ENCODE measurements at regions of chr14 and their contacts with region 1.

Region 1: DNA sequence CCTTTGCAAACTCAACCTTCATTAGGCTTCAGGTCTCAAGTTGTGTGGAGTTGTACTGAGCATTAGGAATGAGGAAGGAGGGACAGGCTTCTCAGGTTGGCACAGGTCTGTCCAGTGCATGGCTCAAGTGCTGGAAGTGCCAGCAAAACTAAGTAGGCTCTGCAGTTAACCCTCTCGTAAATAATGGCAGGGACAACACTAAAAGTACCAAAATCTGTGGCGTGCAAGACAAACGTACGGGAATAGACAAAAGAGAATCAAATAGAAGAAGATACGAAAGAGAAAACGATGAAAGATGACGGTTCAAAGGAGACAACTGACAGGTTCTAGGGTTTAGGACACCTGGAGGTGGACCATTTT is 612 bp downstream of the TRAPPC6B start:
- DNase-seq: no peak
- ATAC-seq: no peak
- H3K4me3 Mint-ChIP-seq: peak overlapping the region; percentile 82 to 99 (median 94)
- H3K27ac Mint-ChIP-seq: peak overlapping the region; percentile 98 to 100 (median 99)
- H3K4me1 Mint-ChIP-seq: peaks cover 23 to 58% (median 45%) of the 10 kb centered on the region in 4 donors
- H3K27me3 Mint-ChIP-seq: no peaks in the 10 kb centered on the region

Region 2: DNA sequence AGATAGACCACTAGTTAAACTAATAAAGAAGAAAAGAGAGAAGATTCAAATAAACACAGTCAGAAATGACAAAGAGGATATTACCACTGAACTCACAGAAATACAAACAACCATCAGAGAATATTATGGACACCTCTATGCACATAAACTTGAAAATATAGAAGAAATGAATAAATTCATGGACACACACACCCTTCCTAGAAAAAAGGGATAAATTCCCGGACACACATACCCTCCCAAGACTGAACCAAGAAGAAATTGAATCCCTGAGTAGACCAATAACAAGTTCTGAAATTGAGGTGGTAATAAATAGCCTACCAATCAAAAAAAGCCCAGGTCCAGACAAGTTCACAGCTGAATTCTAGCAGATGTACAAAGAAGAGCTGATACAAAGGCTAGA is 254.4 kb before region 1 on chr14:
- POLR2A ChIA-PET with region 1: no interaction called
- DNase-seq: no peak
- ATAC-seq: no peak
- H3K4me3 Mint-ChIP-seq: no peak overlapping the region
- H3K27ac Mint-ChIP-seq: no peak overlapping the region
- H3K4me1 Mint-ChIP-seq: no peaks in the 10 kb centered on the region
- H3K27me3 Mint-ChIP-seq: peaks cover 6 to 57% (median 14%) of the 10 kb centered on the region in 5 donors

Region 3: DNA sequence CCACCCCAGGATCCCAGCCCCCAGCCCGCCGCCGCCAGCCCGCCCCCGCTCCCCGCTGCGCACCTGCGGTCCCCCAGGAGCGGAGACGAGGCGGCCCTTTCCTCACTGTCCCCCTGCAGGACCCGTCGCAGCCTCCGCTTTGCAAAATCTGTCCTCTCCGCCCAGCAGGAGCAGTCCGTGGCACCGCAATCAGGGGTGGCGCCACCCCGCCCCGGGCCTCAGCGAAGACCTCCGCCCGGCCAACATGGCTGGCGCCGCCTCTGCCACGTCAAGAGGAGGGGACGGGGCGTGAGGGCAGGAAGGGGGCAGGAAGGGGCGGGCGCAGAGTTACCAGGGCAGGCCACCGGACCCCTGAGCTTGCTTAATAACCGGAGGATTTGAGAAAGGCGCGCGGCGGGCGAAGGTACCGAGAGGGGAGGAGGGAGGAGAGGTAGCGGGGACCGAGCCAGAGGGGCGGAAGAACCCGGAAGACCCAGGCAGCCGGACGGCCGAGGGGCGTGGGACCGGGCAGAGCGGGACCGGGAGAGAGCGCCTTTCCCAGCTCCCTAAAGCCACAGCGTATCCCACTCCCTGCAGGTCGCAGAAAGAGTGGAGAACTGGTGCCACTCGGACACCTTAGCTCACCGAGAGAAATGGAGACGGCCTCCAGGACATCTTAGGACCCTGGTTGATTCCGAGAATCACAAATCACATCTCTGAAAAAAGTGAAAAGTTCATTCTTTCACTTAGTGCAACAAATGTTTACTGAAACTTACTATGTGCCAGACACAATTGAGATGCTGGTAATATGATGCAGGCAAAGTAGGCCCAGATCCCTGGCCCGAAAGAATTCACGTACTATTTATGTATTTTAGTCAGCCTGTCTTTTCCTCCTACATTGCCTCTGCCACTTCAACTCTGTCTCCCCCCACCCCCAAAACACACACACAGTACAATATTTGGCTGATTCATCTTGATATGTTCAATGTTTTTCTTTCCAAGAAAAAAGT is 66.3 kb before region 1 on chr14 and contains the start of gene SEC23A:
- POLR2A ChIA-PET with region 1: interaction called, 17 read pairs
- DNase-seq: peak; percentile 67 to 91 (median 74)
- ATAC-seq: peak; percentile 90 to 93
- H3K4me3 Mint-ChIP-seq: peak within 1 kb of the TSS; percentile 89 to 98 (median 96)
- H3K27ac Mint-ChIP-seq: peak within 1 kb of the TSS; percentile 93 to 99 (median 97)
- H3K4me1 Mint-ChIP-seq: peaks cover 20 to 57% (median 44%) of the 10 kb centered on the region in 4 donors
- H3K27me3 Mint-ChIP-seq: no peaks in the 10 kb centered on the region
- polyA plus RNA-seq, gene SEC23A: 21.0 to 28.5 (median 23.6) TPM

Region 4: DNA sequence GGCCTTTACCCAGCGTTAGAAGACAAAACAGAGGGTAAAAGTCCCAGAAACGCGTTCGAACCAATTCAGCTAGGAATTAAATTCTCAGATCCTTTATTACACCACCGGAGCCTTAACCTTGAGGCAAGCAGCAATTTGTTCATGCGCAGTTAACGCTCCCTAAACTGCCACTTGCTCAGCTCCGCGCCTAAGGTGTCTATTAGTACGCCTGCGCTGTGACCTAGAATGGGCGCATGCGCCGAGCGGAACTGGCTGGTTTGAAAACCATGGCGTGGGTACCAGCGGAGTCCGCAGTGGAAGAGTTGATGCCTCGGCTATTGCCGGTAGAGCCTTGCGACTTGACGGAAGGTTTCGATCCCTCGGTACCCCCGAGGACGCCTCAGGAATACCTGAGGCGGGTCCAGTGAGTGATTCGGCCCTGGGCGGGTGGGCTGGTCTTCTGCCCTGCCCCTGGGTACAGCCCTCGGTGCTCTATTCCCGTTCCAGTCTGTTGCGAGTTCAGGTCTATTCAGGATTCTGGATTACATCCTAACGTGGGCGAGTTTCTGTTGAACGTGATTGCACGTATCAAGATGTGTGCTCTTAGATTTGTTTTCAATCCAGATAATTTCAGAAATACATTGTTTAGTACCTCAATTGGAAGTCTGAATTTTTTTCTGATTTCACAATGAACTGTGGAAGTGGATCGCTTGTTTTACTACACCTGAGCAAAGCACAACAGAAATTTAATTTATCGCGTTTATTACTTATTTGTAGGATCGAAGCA is 55.3 kb before region 1 on chr14 and contains the start of gene GEMIN2:
- POLR2A ChIA-PET with region 1: interaction called, 13 read pairs
- DNase-seq: peak; percentile 87 to 97 (median 94)
- ATAC-seq: peak; percentile 97 to 98
- H3K4me3 Mint-ChIP-seq: peak within 1 kb of the TSS; percentile 94 to 99 (median 97)
- H3K27ac Mint-ChIP-seq: peak within 1 kb of the TSS; percentile 92 to 98 (median 97)
- H3K4me1 Mint-ChIP-seq: peaks cover 6 to 33% (median 19%) of the 10 kb centered on the region in 4 donors
- H3K27me3 Mint-ChIP-seq: no peaks in the 10 kb centered on the region
- polyA plus RNA-seq, gene GEMIN2: 10.5 to 17.0 (median 12.7) TPM

Region 5: GRCh38 chr14:39229222-39229543 is 59.7 kb after region 1 on chr14:
- POLR2A ChIA-PET with region 1: interaction called, 11 read pairs
- DNase-seq: peak in 9 of 10 donors; percentile 6 to 72 (median 40)
- ATAC-seq: peak; percentile 94 to 95
- H3K4me3 Mint-ChIP-seq: peak overlapping the region in 6 of 10 donors; percentile 1 to 30 (median 8)
- H3K27ac Mint-ChIP-seq: peak overlapping the region; percentile 60 to 88 (median 82)
- H3K4me1 Mint-ChIP-seq: peaks cover 14 to 45% (median 33%) of the 10 kb centered on the region in 4 donors
- H3K27me3 Mint-ChIP-seq: no peaks in the 10 kb centered on the region

Region 6: DNA sequence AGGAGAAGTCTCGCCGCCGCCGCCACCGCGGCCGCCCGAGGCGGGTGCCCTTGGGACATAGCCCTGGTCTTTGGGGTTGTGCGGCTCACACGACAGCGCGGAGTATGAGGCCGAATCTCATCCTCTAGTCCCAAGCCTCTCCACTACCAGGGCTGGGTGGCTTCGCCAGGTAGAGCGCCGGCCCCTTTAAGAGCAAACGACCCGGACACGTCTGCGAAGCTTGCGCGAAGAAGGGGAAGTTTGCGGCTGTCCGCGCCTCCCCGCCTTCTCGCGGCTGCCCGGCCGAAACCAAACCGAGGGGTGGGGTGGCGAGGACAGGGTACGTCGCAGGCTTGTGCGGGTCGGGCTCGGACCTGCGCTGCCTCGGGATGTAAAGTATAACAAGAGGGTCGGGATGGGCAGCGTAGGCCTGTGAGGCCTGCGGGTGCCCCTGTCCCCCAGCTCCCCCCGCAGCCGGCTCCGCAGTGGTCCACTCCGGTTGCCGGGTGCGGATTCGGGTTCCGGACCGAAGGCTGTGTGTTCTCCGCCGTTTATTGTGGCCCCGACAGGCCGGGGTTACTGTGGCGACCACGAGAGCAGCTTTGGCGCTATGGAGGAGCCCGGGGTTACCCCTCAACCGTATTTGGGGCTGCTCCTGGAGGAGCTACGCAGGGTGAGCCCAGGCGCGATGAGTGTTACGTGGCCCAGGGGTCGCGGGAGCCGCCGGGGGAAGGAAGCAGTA is 97.5 kb after region 1 on chr14:
- POLR2A ChIA-PET with region 1: interaction called, 41 read pairs
- DNase-seq: peak; percentile 48 to 84 (median 70)
- ATAC-seq: peak; percentile 80 to 85
- H3K4me3 Mint-ChIP-seq: peak overlapping the region; percentile 69 to 97 (median 93)
- H3K27ac Mint-ChIP-seq: peak overlapping the region; percentile 92 to 98 (median 96)
- H3K4me1 Mint-ChIP-seq: peaks cover 20 to 58% (median 51%) of the 10 kb centered on the region in 4 donors
- H3K27me3 Mint-ChIP-seq: no peaks in the 10 kb centered on the region

Region 7: GRCh38 chr14:39368261-39368959 is 198.9 kb after region 1 on chr14:
- POLR2A ChIA-PET with region 1: no interaction called
- DNase-seq: peak in 1 of 10 donors; percentile 5
- ATAC-seq: no peak
- H3K4me3 Mint-ChIP-seq: no peak overlapping the region
- H3K27ac Mint-ChIP-seq: peak overlapping the region in 3 of 10 donors; percentile 1 to 64 (median 58)
- H3K4me1 Mint-ChIP-seq: peaks cover 0 to 7% (median 2%) of the 10 kb centered on the region in 4 donors
- H3K27me3 Mint-ChIP-seq: no peaks in the 10 kb centered on the region

Region 8: DNA sequence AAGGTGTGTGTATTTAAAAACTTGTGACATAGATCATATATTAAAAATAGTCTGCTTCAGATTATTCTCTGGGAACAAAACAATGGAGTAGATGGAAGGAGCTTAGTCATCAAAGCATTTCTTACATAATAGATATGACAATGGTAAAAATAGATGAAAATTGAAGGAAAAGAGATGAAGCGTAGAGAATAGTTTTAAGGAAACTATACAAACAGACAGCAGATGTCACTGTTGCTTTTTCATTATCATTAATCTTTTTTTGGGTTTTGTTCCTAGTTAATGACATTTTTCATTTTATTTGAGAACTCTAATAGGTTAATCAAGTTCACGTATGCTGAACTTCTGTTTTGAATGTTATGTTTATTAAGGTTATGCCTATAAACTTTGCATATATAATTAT is 412.0 kb after region 1 on chr14:
- POLR2A ChIA-PET with region 1: no interaction called
- DNase-seq: peak in 2 of 10 donors; percentile 7 to 31
- ATAC-seq: no peak
- H3K4me3 Mint-ChIP-seq: no peak overlapping the region
- H3K27ac Mint-ChIP-seq: no peak overlapping the region
- H3K4me1 Mint-ChIP-seq: peaks cover 0 to 5% (median under 1%) of the 10 kb centered on the region in 4 donors
- H3K27me3 Mint-ChIP-seq: no peaks in the 10 kb centered on the region

Measured in naive thymus-derived CD8-positive, alpha-beta T cell (primary cell).